Posterior vena cava (tissue), 2 donors: ENCODE measurements at regions of chr12 and their contacts with region 1.

Region 1: GRCh38 chr12:123995023-123995748 is 22.2 kb downstream of the ZNF664 start:
- DNase-seq: no peak

Region 2: GRCh38 chr12:122614839-122615238 is 1380.3 kb before region 1 on chr12:
- intact Hi-C with region 1: loop called in 1 of 2 experiments (anchors 5 kb)
- DNase-seq: no peak

Region 3: DNA sequence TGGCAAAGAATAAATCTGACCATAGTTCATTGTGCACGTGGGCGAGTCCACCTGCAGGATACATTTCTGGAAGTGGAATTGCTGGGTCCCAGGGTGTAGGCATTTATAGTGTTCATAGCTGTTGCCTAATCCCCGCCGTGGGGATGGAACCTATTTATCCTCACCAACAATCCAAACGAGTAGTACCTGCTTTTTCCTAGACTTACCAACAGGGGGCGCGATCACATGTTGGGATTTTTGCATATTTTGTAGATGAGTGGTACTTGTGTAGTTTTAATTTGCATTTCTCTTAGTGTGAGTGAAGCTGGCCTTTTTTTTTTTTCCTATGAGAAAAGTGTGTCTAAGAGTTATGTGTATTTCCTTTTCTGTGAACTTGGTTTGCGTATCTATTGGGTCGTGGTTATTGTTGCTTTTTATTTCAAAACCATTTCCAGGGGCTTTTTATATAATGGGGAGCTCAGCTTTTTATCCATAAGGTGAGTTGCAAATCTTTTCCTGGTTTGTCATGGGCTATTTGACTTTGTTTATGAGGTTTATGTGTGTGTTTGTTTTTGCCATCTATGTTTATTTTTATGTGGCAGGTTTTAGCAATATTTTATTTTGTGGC is 89.8 kb before region 1 on chr12:
- intact Hi-C with region 1: no loop called
- DNase-seq: no peak